Spleen (tissue), 13 donors: ENCODE measurements at regions of chr11 and their contacts with region 1.

Region 1: GRCh38 chr11:117327567-117328374 is at the start of gene CEP164:
- DNase-seq: peak; percentile 98
- H3K4me3 ChIP-seq: peak within 1 kb of the TSS; percentile 71 to 95 (median 86)
- H3K27ac ChIP-seq: peak within 1 kb of the TSS; percentile 83 to 93 (median 90)
- H3K4me1 ChIP-seq: peaks cover 6 to 33% (median 13%) of the 10 kb centered on the region in 6 donors
- H3K27me3 ChIP-seq: no peaks in the 10 kb centered on the region
- CTCF ChIP-seq: peak in 1 of 11 experiments; percentile 23
- POLR2A ChIP-seq: peak in 1 of 3 donors; percentile 17
- total RNA-seq, gene CEP164: 21.2 to 48.3 (median 34.8) TPM

Region 2: GRCh38 chr11:117058761-117059261 is 269.0 kb before region 1 on chr11:
- intact Hi-C with region 1: no loop called
- DNase-seq: no peak
- H3K4me3 ChIP-seq: no peak overlapping the region
- H3K27ac ChIP-seq: no peak overlapping the region
- H3K4me1 ChIP-seq: peaks cover 28 to 83% (median 49%) of the 10 kb centered on the region in 6 donors
- H3K27me3 ChIP-seq: no peaks in the 10 kb centered on the region
- CTCF ChIP-seq: no peak
- POLR2A ChIP-seq: no peak

Region 3: GRCh38 chr11:117232092-117232878 is 95.5 kb before region 1 on chr11 and contains the start of gene RNF214:
- intact Hi-C with region 1: loop called (anchors 10 kb)
- DNase-seq: peak; percentile 95
- H3K4me3 ChIP-seq: peak within 1 kb of the TSS; percentile 81 to 95 (median 91)
- H3K27ac ChIP-seq: peak within 1 kb of the TSS; percentile 91 to 98 (median 94)
- H3K4me1 ChIP-seq: peaks cover 34 to 57% (median 45%) of the 10 kb centered on the region in 6 donors
- H3K27me3 ChIP-seq: no peaks in the 10 kb centered on the region
- CTCF ChIP-seq: peak; percentile 80 to 99 (median 93)
- POLR2A ChIP-seq: no peak
- total RNA-seq, gene RNF214: 13.1 to 29.6 (median 20.9) TPM